ENCODE measurements at regions of chr18 and their contacts with region 1.

Region 1: DNA sequence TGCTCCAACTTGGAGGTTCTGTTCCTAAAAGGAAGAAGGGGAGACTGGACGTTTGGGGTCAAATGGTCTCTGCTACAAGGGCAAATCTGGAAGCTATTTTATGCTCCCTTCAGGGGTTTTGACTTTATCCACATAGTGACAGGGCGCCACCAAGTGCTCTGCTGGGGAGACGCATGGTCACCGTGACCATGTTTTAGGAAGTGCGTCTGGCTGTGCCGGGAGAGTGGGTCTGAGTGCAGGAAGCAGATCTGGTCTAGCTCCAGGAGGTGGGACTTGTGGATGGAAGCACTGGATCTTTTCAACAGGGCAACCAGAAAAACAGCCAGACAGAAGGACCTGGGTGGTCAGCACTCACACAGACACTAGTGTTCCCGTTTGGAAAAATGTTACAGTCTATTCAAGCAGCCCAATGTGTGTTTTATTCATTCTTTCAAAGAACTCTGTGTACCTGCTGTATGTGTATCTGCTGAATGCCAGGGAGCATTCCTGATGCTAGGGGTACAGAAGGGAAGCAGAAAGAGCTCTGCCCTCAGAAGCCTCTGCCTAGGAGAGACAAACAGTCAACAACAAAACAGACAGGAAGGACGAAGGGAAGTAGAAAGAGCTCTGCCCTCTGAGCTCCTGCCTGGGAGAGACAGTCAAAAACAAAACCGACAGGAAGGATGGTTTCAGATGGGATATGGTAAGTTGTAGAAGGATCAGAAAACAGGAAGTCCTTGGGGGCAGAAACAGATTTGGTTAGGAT is 14.3 kb downstream of the IMPA2 start:
- DNase-seq: peak; percentile 81
- ATAC-seq: peak; percentile 84
- H3K4me3 ChIP-seq: peak overlapping the region; percentile 37; the same call in 1 of the 2 replicates
- H3K27ac ChIP-seq: peak overlapping the region; percentile 89
- H3K4me1 ChIP-seq: peaks cover 31% of the 10 kb centered on the region
- H3K27me3 ChIP-seq: no peaks in the 10 kb centered on the region
- CTCF ChIP-seq: peak; percentile 96

Region 2: GRCh38 chr18:11908182-11909060 is 87.2 kb before region 1 on chr18 and contains the start of gene MPPE1:
- CTCF ChIA-PET with region 1: no interaction called
- POLR2A ChIA-PET with region 1: no interaction called
- intact Hi-C with region 1: loop called (anchors 1 kb)
- DNase-seq: peak; percentile 86
- ATAC-seq: peak; percentile 87
- H3K4me3 ChIP-seq: peak within 1 kb of the TSS; percentile 91
- H3K27ac ChIP-seq: peak within 1 kb of the TSS; percentile 81
- H3K4me1 ChIP-seq: peaks cover 31% of the 10 kb centered on the region
- H3K27me3 ChIP-seq: no peaks in the 10 kb centered on the region
- CTCF ChIP-seq: no peak
- total RNA-seq, gene MPPE1: 15.8 and 17.9 TPM in 2 replicates

Region 3: GRCh38 chr18:11937874-11938478 is 57.6 kb before region 1 on chr18:
- CTCF ChIA-PET with region 1: interaction called, 62 read pairs
- POLR2A ChIA-PET with region 1: no interaction called
- intact Hi-C with region 1: loop called (anchors 1 kb)
- DNase-seq: peak; percentile 87
- ATAC-seq: peak; percentile 84
- H3K4me3 ChIP-seq: no peak overlapping the region
- H3K27ac ChIP-seq: no peak overlapping the region
- H3K4me1 ChIP-seq: no peaks in the 10 kb centered on the region
- H3K27me3 ChIP-seq: no peaks in the 10 kb centered on the region
- CTCF ChIP-seq: peak; percentile 91

Region 4: DNA sequence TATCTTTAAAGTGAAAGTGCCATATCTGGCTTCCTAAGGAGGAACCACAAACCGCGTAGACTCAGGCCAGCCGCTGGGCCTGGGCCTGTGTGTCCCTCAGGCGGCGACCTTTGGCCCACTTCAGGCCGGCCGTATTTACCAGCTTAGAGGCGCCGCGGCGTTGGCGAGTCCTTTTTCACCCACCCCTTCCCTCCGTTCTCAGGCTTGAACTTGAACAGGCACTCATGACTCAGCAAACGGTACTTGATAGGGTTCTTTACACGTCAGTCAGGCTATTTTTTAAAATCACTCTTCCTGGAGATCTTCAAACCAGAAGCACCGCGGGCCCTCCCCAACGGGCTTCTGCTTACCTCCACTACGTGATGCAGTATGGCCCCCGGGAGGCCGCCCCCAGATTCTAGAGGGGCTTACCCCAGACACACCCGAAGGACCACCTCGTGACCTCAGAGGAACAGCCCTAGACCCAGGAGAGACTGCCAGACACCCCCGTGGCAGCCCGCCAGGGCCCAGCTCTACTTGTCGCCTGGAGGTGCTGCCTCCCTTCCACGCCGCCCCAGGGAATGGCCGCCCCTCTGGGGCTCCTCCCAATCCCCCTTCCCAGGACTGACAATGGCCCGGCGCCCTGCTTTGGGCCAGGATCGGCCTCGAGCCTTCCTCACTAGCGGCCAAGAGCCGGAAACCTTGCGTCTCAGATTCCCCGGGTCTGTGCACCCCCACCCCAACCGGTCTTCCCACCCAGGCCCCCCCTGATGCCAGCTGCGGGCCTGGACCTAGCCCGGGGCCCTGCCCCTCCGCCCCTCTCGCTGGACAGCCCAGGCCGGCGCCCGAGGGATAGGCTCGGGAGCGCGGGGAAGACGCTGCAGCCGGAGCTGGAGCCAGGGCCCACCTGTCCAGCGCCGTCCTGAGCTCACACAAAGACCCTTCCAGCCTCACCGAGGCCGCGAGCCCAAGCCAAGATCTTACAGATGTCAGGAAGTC is 48.1 kb before region 1 on chr18:
- CTCF ChIA-PET with region 1: interaction called, 4 read pairs
- POLR2A ChIA-PET with region 1: no interaction called
- intact Hi-C with region 1: loop called (anchors 2 kb)
- DNase-seq: peak; percentile 78
- ATAC-seq: peak; percentile 81
- H3K4me3 ChIP-seq: no peak overlapping the region
- H3K27ac ChIP-seq: peak overlapping the region; percentile 34; the same call in 1 of the 2 replicates
- H3K4me1 ChIP-seq: peaks cover 10% of the 10 kb centered on the region; the same call in 1 of the 2 replicates
- H3K27me3 ChIP-seq: no peaks in the 10 kb centered on the region
- CTCF ChIP-seq: no peak

Region 5: DNA sequence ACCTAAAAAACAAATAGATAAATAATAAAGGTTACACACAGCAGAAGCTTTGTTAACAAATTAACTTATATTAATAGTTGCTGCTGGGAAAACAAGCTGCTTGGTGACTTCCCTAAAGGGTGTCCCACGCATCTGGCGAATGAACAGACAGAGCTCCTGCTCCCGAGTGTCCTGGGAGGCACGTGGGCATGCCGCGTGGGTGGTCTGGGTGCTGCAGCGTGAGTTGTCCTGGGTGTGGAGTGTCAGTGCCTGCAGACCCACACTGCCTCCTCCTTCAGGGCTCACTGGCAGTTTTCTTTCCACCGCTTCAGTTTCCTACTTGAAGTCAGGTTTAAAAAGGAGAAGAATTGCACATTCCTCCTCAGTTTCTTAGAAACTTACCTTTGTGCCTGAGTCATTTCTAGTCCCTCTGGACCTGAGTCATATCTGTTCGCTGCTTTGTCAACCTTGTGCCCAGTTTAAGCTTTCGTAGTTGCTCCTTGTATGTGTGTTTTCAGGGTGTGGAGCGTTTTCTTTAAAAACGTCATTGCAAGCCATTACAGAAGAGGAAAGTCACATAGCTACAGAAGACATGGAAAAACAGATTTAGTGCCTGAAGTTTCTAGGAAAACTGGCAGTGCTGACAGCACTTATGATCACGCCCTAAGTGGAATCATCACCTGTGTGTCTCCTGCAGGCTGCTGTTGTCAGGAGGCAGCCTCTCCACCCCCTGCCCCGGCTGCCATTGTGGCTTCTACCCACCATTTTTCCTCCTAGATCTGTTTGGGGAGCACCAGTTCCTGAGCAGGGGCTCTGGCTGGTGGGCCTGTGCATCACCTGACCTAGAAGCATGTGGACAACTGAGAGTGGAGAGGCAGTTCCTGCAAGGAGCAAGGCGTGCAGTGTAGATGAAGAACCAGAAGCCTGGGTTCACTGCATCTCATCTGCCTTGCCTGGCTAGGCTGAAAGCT is 10.2 kb after region 1 on chr18:
- CTCF ChIA-PET with region 1: interaction called, 25 read pairs
- POLR2A ChIA-PET with region 1: interaction called, 3 read pairs
- intact Hi-C with region 1: loop called (anchors 1 kb)
- DNase-seq: peak; percentile 94
- ATAC-seq: peak; percentile 84
- H3K4me3 ChIP-seq: peak overlapping the region; percentile 54
- H3K27ac ChIP-seq: peak overlapping the region; percentile 99
- H3K4me1 ChIP-seq: peaks cover 34% of the 10 kb centered on the region
- H3K27me3 ChIP-seq: no peaks in the 10 kb centered on the region
- CTCF ChIP-seq: no peak

Region 6: GRCh38 chr18:12038639-12039417 is 43.2 kb after region 1 on chr18:
- CTCF ChIA-PET with region 1: interaction called, 24 read pairs
- POLR2A ChIA-PET with region 1: no interaction called
- intact Hi-C with region 1: loop called (anchors 1 kb)
- DNase-seq: peak; percentile 83
- ATAC-seq: peak; percentile 93
- H3K4me3 ChIP-seq: peak overlapping the region; percentile 74
- H3K27ac ChIP-seq: no peak overlapping the region
- H3K4me1 ChIP-seq: peaks cover 13% of the 10 kb centered on the region; the same call in 1 of the 2 replicates
- H3K27me3 ChIP-seq: no peaks in the 10 kb centered on the region
- CTCF ChIP-seq: peak; percentile 94

Region 7: GRCh38 chr18:12079491-12080237 is 84.0 kb after region 1 on chr18:
- CTCF ChIA-PET with region 1: no interaction called
- POLR2A ChIA-PET with region 1: no interaction called
- intact Hi-C with region 1: no loop called
- DNase-seq: no peak
- ATAC-seq: no peak
- H3K4me3 ChIP-seq: no peak overlapping the region
- H3K27ac ChIP-seq: no peak overlapping the region
- H3K4me1 ChIP-seq: no peaks in the 10 kb centered on the region
- H3K27me3 ChIP-seq: 0 out of 2 replicates have a peak, but pooled peaks cover 8% of the 10 kb centered on the region
- CTCF ChIP-seq: no peak